ENCODE measurements at regions of chr2 and their contacts with region 1.

Region 1: DNA sequence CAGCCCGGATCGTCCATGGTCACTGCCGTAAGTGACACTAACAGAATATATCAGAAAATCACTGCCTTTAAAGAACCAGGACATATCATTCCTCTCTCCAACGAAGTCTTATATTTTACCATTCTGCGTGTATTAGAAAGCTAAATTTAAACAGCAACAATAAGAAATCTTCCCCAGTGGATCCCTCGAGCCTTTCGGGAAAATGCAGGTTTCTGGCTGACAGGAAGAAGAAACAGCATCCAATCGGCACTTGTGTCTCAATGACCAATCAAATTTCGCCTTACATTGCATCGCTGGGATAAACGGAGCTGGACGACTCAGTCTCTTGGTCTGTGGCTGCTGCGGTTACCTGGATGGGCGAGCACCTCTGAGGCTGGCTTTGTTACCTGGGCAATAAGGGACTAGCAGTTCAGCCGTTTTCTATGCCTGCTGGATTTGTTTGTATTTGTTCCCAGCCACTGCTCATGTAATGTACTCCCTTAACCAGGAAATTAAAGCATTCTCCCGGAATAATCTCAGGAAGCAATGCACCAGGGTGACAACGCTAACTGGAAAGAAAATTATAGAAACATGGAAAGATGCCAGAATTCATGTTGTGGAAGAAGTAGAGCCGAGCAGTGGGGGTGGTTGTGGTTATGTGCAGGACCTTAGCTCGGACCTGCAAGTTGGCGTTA is at the start of gene DUSP19:
- DNase-seq: peak; percentile 93
- H3K4me3 Mint-ChIP-seq: peak within 1 kb of the TSS; percentile 86
- H3K27ac Mint-ChIP-seq: peak within 1 kb of the TSS; percentile 40
- H3K4me1 Mint-ChIP-seq: peaks cover 7% of the 10 kb centered on the region
- H3K27me3 Mint-ChIP-seq: no peaks in the 10 kb centered on the region
- total RNA-seq, gene DUSP19: 2.1 to 2.7 TPM

Region 2: GRCh38 chr2:183038341-183039300 is 40.0 kb before region 1 on chr2 and contains the start of gene NCKAP1:
- CTCF ChIA-PET with region 1: no interaction called
- POLR2A ChIA-PET with region 1: no interaction called
- intact Hi-C with region 1: loop called (anchors 1 kb)
- DNase-seq: peak; percentile 90
- H3K4me3 Mint-ChIP-seq: peak within 1 kb of the TSS; percentile 78
- H3K27ac Mint-ChIP-seq: peak within 1 kb of the TSS; percentile 51
- H3K4me1 Mint-ChIP-seq: peaks cover 28% of the 10 kb centered on the region
- H3K27me3 Mint-ChIP-seq: peaks cover 35% of the 10 kb centered on the region
- total RNA-seq, gene NCKAP1: 18.8 to 21.7 TPM

Region 3: DNA sequence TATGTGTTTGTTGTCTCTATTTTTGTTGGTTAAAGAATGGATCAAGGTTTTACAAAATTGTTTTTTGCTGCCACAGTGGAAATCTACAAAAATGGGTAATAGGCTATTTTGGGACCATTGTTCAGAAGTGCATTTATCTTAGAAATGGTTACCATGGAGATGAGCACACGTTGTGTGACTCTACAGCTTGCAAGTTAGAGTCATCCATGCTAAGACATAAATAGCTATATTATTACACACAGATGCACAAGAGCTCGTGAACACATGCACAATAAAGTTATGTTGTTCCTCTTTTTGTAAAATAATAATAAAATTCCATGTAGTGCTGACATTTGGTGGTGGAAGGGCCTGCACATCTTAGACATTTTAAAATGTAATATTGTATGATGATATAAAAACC is 15.5 kb before region 1 on chr2:
- CTCF ChIA-PET with region 1: no interaction called
- POLR2A ChIA-PET with region 1: no interaction called
- intact Hi-C with region 1: no loop called
- DNase-seq: no peak
- H3K4me3 Mint-ChIP-seq: no peak overlapping the region
- H3K27ac Mint-ChIP-seq: no peak overlapping the region
- H3K4me1 Mint-ChIP-seq: peaks cover 7% of the 10 kb centered on the region
- H3K27me3 Mint-ChIP-seq: peaks cover 26% of the 10 kb centered on the region

Region 4: GRCh38 chr2:183093857-183094657 is 15.5 kb after region 1 on chr2:
- CTCF ChIA-PET with region 1: interaction called, 3 read pairs
- POLR2A ChIA-PET with region 1: no interaction called
- intact Hi-C with region 1: loop called (anchors 1 kb)
- DNase-seq: no peak
- H3K4me3 Mint-ChIP-seq: no peak overlapping the region
- H3K27ac Mint-ChIP-seq: no peak overlapping the region
- H3K4me1 Mint-ChIP-seq: peaks cover 7% of the 10 kb centered on the region
- H3K27me3 Mint-ChIP-seq: no peaks in the 10 kb centered on the region

Region 5: DNA sequence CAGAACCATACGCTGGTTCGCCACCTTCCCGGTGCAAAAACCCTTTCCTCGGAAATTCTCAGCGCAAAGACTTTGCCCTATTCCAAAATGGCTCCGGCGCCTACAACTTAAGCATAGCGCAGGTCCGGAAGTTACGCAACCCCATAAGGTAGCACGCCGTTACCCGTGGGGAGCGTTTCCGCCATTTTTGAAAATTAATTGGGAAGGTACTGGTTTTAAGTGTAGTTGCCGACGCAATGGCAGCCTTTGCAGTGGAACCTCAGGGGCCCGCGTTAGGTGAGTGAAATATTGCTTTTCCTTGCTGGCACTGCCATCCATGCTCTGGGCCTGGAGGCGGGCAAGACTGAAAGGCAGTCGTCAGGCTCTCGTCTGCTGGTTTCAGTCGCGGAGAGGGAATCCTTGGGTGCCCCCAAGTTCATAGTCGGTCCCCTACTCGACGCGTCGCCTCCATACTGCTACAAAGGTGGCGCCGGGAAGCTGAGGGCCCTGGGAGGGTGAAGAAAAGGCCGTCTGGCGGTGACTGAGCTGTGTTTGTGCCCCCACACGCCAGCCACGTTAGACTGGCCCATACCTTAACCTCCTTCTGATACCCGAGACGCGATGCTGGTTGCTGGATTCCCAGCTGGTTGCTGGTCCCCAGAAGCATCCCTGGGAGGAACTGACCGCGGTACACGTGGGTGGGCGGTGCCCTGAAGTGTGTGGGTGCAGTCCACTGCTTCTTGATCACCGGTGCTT is 45.8 kb after region 1 on chr2 and contains the start of gene NUP35:
- CTCF ChIA-PET with region 1: no interaction called
- POLR2A ChIA-PET with region 1: no interaction called
- intact Hi-C with region 1: loop called (anchors 1 kb)
- DNase-seq: peak; percentile 90
- H3K4me3 Mint-ChIP-seq: peak within 1 kb of the TSS; percentile 94
- H3K27ac Mint-ChIP-seq: peak within 1 kb of the TSS; percentile 97
- H3K4me1 Mint-ChIP-seq: peaks cover 30% of the 10 kb centered on the region
- H3K27me3 Mint-ChIP-seq: peaks cover under 1% of the 10 kb centered on the region
- total RNA-seq, gene NUP35: 27.6 to 31.7 TPM

Region 6: GRCh38 chr2:183348492-183348891 is 269.9 kb after region 1 on chr2:
- CTCF ChIA-PET with region 1: no interaction called
- POLR2A ChIA-PET with region 1: no interaction called
- intact Hi-C with region 1: no loop called
- DNase-seq: no peak
- H3K4me3 Mint-ChIP-seq: no peak overlapping the region
- H3K27ac Mint-ChIP-seq: no peak overlapping the region
- H3K4me1 Mint-ChIP-seq: no peaks in the 10 kb centered on the region
- H3K27me3 Mint-ChIP-seq: no peaks in the 10 kb centered on the region

Measured in activated CD4-positive, alpha-beta memory T cell treated with anti-CD3 and anti-CD28 coated beads for 36 hours (primary cell).